ENCODE measurements at regions of chr9 and their contacts with region 1.

Region 1: DNA sequence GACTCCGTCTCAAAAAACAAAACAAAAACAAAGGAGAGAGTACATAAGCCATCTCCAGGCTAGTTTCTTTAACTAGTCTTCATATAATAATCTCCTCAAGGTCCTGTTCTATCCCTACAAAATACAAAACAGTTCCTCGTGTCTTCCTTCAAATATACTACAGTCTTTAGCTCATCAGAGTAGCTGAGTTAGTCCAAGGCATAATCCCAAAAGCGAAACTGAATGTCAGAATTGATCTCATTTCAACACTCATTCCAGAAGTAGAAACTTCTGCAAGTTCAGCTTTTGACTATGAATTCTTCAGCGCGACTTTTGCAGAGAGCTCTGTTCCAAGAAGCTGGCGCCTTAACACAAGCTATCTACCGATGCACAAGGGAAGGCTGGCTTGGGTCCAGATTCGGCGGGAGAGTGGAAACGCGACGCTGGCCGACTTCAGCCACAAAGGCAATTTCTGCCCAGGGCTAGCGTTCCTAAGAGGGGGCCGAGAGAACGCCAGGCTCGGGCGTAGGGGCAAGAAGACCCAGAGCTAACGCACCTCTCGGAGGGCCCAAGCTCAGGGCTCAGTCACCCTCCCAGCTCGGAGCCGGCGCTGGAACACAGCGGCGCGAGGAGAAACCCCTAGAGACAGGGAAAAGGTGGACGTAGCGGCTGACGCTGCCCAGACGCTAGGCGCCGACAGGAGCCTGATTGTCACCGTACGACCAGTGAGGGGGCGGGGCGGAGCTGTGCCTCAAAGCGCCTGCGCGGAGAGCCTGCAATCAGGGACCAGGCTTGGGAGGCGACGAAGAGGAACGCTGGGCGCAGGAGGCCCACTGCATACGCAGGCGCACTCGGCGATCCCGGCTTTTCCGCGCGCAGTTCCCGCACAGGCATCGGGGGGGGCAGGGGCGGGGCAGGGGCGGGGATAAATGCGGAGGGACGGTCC is 469 bp upstream of the HSDL2 start:
- DNase-seq: peak; percentile 89 to 97 (median 93)
- ATAC-seq: peak; percentile 98
- H3K4me3 ChIP-seq: peak overlapping the region; percentile 78
- H3K4me3 Mint-ChIP-seq: peak overlapping the region; percentile 86 to 100 (median 99)
- H3K27ac ChIP-seq: peak overlapping the region; percentile 85
- H3K27ac Mint-ChIP-seq: peak overlapping the region; percentile 84 to 99 (median 97)
- H3K4me1 ChIP-seq: peaks cover 14 to 17% of the 10 kb centered on the region in 2 donors
- H3K4me1 Mint-ChIP-seq: peaks cover 24 to 61% (median 53%) of the 10 kb centered on the region in 7 donors
- H3K27me3 ChIP-seq: no peaks in the 10 kb centered on the region
- H3K27me3 Mint-ChIP-seq: no peaks in the 10 kb centered on the region

Region 2: GRCh38 chr9:111597817-111598729 is 781.4 kb before region 1 on chr9:
- CTCF ChIA-PET with region 1: no interaction called
- POLR2A ChIA-PET with region 1: no interaction called
- intact Hi-C with region 1: loop called in 1 of 2 experiments (anchors 5 kb)
- DNase-seq: peak; percentile 40 to 77 (median 65)
- ATAC-seq: peak; percentile 82
- H3K4me3 ChIP-seq: peak overlapping the region; percentile 33
- H3K4me3 Mint-ChIP-seq: peak overlapping the region; percentile 77 to 94 (median 89)
- H3K27ac ChIP-seq: no peak overlapping the region
- H3K27ac Mint-ChIP-seq: peak overlapping the region in 4 of 9 donors; percentile 2 to 62 (median 42)
- H3K4me1 ChIP-seq: peaks cover 12 to 15% of the 10 kb centered on the region in 2 donors
- H3K4me1 Mint-ChIP-seq: peaks cover 13 to 29% (median 24%) of the 10 kb centered on the region in 7 donors
- H3K27me3 ChIP-seq: peaks cover 0 to 9% of the 10 kb centered on the region in 2 donors
- H3K27me3 Mint-ChIP-seq: peaks cover 17 to 42% (median 29%) of the 10 kb centered on the region in 5 donors

Region 3: DNA sequence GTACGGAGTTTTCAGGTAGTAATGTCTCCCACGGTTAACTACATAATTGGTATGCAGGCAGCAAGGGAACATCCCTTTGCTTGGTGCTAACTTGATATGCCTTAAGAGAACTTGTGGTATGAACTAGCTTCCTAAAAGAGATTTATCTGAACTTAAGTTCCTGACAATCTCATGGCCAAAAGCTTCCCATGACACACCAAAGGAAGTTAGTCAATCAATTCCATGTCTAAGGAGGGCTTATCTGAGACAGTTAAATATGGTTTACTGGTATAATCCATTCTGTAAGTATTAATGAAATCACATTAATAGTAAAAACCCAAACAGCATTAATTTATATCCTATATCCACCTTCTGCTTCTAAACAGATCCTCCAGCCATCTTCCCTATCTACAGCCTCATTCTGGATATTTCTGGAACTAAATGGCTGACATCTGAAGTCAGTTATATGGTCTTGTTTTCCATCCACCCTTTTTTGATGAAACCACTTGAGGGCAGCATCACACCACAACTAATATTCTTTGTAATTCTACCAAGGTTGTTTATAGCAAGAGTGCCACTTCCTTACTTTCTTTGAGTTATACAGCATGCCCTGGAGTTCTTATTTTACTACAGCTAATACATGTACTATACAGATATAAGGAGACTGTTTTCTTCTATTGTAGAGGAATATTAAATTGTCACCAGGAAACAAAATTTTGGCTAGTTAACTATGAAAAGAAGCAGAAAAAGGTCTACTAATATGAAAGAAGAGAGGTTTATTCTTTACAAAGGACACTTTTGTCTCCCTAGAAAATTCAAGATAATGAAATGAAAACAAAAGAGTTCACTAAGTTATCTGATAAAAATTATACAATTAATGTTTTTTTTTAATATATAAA is 619.4 kb before region 1 on chr9:
- CTCF ChIA-PET with region 1: no interaction called
- POLR2A ChIA-PET with region 1: no interaction called
- intact Hi-C with region 1: loop called in 1 of 2 experiments (anchors 5 kb)
- DNase-seq: peak in 8 of 9 donors; percentile 25 to 77 (median 68)
- ATAC-seq: peak; percentile 82
- H3K4me3 ChIP-seq: no peak overlapping the region
- H3K4me3 Mint-ChIP-seq: no peak overlapping the region
- H3K27ac ChIP-seq: no peak overlapping the region
- H3K27ac Mint-ChIP-seq: no peak overlapping the region
- H3K4me1 ChIP-seq: no peaks in the 10 kb centered on the region
- H3K4me1 Mint-ChIP-seq: peaks cover 3 to 8% (median 5%) of the 10 kb centered on the region in 7 donors
- H3K27me3 ChIP-seq: no peaks in the 10 kb centered on the region
- H3K27me3 Mint-ChIP-seq: no peaks in the 10 kb centered on the region

Region 4: GRCh38 chr9:112174218-112174964 is 205.0 kb before region 1 on chr9:
- CTCF ChIA-PET with region 1: no interaction called
- POLR2A ChIA-PET with region 1: interaction called, 4 read pairs
- intact Hi-C with region 1: loop called (anchors 1 to 5 kb)
- DNase-seq: peak; percentile 42 to 80 (median 63)
- ATAC-seq: peak; percentile 87
- H3K4me3 ChIP-seq: peak overlapping the region; percentile 67
- H3K4me3 Mint-ChIP-seq: peak overlapping the region; percentile 83 to 94 (median 90)
- H3K27ac ChIP-seq: peak overlapping the region; percentile 9
- H3K27ac Mint-ChIP-seq: peak overlapping the region; percentile 65 to 95 (median 87)
- H3K4me1 ChIP-seq: peaks cover 33 to 54% of the 10 kb centered on the region in 2 donors
- H3K4me1 Mint-ChIP-seq: peaks cover 49 to 81% (median 73%) of the 10 kb centered on the region in 7 donors
- H3K27me3 ChIP-seq: no peaks in the 10 kb centered on the region
- H3K27me3 Mint-ChIP-seq: peaks cover 0 to 3% (median 0%) of the 10 kb centered on the region in 5 donors

Region 5: DNA sequence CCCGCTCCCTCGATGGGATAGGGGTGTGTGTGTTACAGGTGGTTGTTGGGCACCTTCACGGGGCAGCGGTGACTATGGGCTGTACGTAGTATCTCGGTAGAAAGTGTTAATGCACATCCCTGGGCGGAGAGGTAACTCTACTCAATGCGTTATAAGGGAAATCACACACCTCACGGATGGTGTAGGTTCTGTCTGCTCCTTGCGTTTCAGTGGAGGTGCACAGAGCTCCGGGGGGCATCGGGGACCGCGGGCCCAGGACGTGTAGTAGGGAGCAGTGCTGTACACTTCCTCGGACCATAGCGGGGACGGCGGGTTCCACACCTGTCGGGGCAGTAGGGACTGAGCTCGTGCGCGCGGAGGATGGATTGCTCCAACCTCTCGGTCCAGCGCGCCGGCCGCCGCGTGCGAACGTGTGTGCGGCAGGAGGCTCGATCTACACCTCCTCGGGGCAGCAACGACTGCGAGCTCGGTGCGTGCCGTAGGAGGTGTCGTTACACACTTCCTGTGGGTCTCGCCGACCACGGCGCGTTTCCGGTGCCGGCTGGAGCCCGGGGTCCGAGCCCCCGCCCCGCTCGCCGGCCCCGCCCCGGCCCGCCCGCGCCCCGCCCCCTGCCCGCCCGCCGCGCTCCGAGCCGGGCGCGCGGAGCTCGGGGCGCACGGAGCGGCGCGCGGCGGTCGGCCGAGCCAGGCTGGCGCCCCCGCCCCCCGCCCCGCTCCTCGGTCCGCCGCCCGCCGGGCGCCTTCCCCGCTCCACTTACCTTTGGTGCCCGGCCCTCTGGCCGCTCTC is 107.0 kb after region 1 on chr9 and contains the start of gene KIAA1958:
- CTCF ChIA-PET with region 1: no interaction called
- POLR2A ChIA-PET with region 1: interaction called, 13 read pairs
- intact Hi-C with region 1: loop called (anchors 1 kb)
- DNase-seq: peak; percentile 51 to 88 (median 73)
- ATAC-seq: peak; percentile 88
- H3K4me3 ChIP-seq: peak within 1 kb of the TSS; percentile 69
- H3K4me3 Mint-ChIP-seq: peak within 1 kb of the TSS; percentile 95 to 100 (median 98)
- H3K27ac ChIP-seq: peak within 1 kb of the TSS; percentile 72
- H3K27ac Mint-ChIP-seq: peak within 1 kb of the TSS; percentile 93 to 98 (median 97)
- H3K4me1 ChIP-seq: peaks cover 4 to 6% of the 10 kb centered on the region in 2 donors
- H3K4me1 Mint-ChIP-seq: peaks cover 19 to 64% (median 49%) of the 10 kb centered on the region in 7 donors
- H3K27me3 ChIP-seq: no peaks in the 10 kb centered on the region
- H3K27me3 Mint-ChIP-seq: peaks cover 0 to 6% (median 0%) of the 10 kb centered on the region in 5 donors
- total RNA-seq, gene KIAA1958: 6.2 to 8.3 (median 7.0) TPM

Region 6: DNA sequence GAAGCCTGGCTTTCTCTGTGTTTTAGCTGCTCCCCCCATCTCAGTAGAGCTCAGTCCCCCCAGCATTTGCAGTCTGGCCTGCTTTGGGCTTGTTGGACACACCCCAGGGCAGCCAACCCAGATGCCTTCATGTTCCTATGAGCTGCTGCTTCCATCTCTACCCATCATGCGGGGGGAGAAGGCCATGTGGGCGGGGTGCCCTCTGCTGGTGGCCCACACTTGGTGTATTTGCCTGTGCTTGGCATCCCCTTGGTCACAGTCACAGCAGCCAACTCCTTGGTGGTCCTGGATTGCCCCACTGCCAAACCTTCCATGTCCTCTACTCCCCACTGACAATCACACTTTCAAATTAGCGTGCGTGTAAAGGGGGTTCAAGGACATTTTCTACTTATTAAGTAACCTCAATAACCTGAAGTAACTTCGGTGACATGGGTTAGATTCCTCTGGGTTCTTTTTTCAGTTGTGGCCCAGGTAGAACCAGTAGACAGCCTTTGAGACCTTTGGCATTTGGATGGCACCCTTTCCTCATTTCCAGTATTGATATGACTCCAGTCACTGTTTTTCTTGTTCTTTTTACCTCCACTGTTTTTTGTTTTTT is 413.9 kb after region 1 on chr9:
- CTCF ChIA-PET with region 1: no interaction called
- POLR2A ChIA-PET with region 1: no interaction called
- intact Hi-C with region 1: loop called (anchors 1 to 10 kb)
- DNase-seq: peak; percentile 59 to 76 (median 72)
- ATAC-seq: peak; percentile 98
- H3K4me3 ChIP-seq: no peak overlapping the region
- H3K4me3 Mint-ChIP-seq: no peak overlapping the region
- H3K27ac ChIP-seq: no peak overlapping the region
- H3K27ac Mint-ChIP-seq: no peak overlapping the region
- H3K4me1 ChIP-seq: no peaks in the 10 kb centered on the region
- H3K4me1 Mint-ChIP-seq: peaks cover 0 to 19% (median 12%) of the 10 kb centered on the region in 7 donors
- H3K27me3 ChIP-seq: no peaks in the 10 kb centered on the region
- H3K27me3 Mint-ChIP-seq: no peaks in the 10 kb centered on the region